ENCODE measurements at regions of chr11 and their contacts with region 1.

Region 1: DNA sequence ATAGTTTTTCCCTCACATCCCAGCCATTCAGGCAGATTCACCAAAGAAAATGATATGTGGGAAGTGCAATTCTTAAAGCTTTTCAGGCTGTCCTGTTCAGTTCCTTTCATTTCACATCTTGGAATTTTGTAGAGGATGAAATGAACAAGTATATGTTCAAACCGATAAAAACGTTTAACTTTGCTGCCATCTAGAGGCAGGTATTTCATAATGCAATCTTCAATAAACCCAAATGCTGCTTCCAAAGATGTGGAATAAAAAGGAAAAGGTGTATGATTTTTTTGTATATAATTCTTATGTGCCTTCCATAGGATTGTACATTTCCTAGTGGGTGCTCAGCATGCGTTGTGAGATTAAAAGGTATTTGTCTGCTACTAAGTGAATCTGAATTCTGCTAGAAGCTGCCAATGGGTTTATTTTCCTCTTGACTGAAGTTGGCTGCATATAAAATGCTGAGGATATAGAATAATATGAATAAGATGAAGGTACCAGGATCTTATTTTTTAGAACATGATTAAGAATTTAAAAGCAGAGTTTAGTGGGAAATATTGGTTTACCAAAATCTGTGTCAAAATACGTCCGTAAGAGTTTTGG is 199.3 kb downstream of the PGR start:
- DNase-seq: no peak
- H3K4me3 ChIP-seq: no peak overlapping the region
- H3K27ac ChIP-seq: no peak overlapping the region
- H3K4me1 ChIP-seq: no peaks in the 10 kb centered on the region
- H3K27me3 ChIP-seq: no peaks in the 10 kb centered on the region
- CTCF ChIP-seq: peak; percentile 58 to 68 (median 62)
- EP300 ChIP-seq: no peak
- POLR2A ChIP-seq: no peak

Region 2: GRCh38 chr11:100581318-100581717 is 349.0 kb before region 1 on chr11:
- in situ Hi-C with region 1: loop called (anchors 10 kb)
- intact Hi-C with region 1: loop called (anchors 5 kb)
- DNase-seq: no peak
- H3K4me3 ChIP-seq: no peak overlapping the region
- H3K27ac ChIP-seq: no peak overlapping the region
- H3K4me1 ChIP-seq: no peaks in the 10 kb centered on the region
- H3K27me3 ChIP-seq: no peaks in the 10 kb centered on the region
- CTCF ChIP-seq: no peak
- EP300 ChIP-seq: no peak
- POLR2A ChIP-seq: no peak

Region 3: GRCh38 chr11:100808904-100809491 is 121.3 kb before region 1 on chr11:
- in situ Hi-C with region 1: no loop called
- intact Hi-C with region 1: no loop called
- DNase-seq: no peak
- H3K4me3 ChIP-seq: no peak overlapping the region
- H3K27ac ChIP-seq: no peak overlapping the region
- H3K4me1 ChIP-seq: no peaks in the 10 kb centered on the region
- H3K27me3 ChIP-seq: no peaks in the 10 kb centered on the region
- CTCF ChIP-seq: no peak
- EP300 ChIP-seq: no peak
- POLR2A ChIP-seq: no peak